Activated CD4-positive, alpha-beta T cell treated with anti-CD3 and anti-CD28 coated beads, Interleukin-2, amount 10 ng/mL, durations not matched to agents 24 days and 14 days (primary cell): ENCODE measurements at regions of chr2 and their contacts with region 1.

Region 1: DNA sequence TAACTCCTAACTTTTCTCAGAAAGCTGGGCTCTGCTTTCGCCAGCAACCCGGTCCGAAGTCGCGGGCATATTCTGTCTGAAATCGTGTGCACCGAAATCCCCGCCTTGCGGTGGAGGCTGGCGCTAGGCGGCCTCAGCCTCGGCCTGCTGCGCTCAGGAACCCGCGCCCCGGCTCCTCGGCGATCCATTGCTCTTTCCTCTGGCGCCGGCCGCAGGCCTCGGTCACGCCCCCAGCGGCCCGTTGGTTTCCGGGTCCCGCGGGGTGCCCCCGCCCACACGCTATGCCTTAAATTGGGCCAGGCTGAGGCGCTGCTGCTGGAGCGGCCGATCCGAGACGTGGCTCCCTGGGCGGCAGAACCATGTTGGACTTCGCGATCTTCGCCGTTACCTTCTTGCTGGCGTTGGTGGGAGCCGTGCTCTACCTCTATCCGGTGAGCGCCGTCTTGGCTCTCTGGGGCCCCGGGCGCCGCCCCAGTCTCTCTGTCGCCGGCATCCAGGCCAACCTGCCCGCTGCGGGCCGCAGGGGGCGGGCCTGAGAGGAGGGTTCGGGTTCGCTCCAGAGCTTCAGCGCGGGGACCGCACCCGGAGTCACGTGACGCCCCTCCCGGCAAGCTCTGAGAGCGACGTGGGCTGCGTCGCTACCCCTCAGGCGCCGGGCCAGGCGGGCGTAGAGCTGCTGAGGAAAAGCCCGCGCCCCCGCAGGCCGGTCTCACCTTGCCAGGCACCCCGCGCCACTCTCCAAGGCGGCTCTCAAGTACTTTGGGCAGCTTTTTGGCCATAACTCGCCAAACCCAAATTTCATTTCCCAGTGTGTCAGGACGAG is at the start of gene CYP20A1:
- DNase-seq: peak; percentile 99
- H3K4me3 Mint-ChIP-seq: peak within 1 kb of the TSS; percentile 95
- H3K27ac Mint-ChIP-seq: peak within 1 kb of the TSS; percentile 100
- H3K4me1 Mint-ChIP-seq: peaks cover 27% of the 10 kb centered on the region
- H3K27me3 Mint-ChIP-seq: no peaks in the 10 kb centered on the region
- total RNA-seq, gene CYP20A1: 21.6 and 23.2 TPM in 2 replicates

Region 2: DNA sequence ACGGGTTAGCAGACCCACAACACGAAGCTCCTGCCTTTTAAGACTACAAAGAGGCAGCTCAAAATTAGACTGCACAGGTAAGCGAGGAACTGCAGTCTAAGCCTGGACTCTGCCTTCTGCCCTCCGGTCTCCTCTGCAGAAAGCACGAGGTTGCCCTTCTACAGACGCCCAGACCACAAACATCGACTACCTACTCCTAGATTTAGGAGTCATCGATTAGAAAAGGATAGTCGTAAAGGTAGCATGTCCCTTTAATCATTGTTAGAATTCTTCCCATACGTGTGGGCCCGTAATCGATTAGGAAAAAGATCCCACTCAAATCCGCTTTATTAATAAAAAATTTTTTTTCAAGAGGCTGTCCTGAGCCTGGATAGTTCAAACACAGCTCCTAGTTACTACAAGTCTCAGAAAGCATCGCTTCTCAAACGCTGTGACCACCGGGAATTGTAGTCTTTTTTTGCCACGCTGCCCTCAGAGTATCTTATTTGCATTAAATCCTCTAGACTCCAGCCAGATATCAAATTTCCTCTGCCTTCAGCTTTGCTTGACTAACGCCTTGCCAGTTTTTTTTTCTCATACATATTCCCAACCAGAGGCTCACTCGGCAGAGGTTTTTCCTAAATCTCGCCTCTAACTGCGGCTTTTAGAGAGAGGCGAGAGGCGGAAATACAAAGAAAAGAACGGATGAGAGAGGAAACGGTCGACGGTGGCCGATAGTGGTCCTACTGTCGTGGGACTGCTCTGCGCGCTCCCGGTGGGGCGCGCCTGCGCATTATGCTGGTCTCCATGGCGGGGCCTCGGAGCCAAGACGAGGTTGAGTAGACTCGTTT is 327.2 kb before region 1 on chr2 and contains the starts of genes CARF and WDR12:
- intact Hi-C with region 1: loop called (anchors 1 kb)
- DNase-seq: peak; percentile 97
- H3K4me3 Mint-ChIP-seq: peak within 1 kb of the TSS; percentile 99
- H3K27ac Mint-ChIP-seq: peak within 1 kb of the TSS; percentile 95
- H3K4me1 Mint-ChIP-seq: peaks cover 24% of the 10 kb centered on the region
- H3K27me3 Mint-ChIP-seq: no peaks in the 10 kb centered on the region
- total RNA-seq, gene CARF: 3.9 and 4.3 TPM in 2 replicates
- total RNA-seq, gene WDR12: 161 and 167 TPM in 2 replicates

Region 3: GRCh38 chr2:203014456-203015199 is 224.3 kb before region 1 on chr2 and contains the start of gene NBEAL1:
- intact Hi-C with region 1: loop called (anchors 1 kb)
- DNase-seq: peak; percentile 99
- H3K4me3 Mint-ChIP-seq: peak within 1 kb of the TSS; percentile 98
- H3K27ac Mint-ChIP-seq: peak within 1 kb of the TSS; percentile 77
- H3K4me1 Mint-ChIP-seq: peaks cover 31% of the 10 kb centered on the region
- H3K27me3 Mint-ChIP-seq: peaks cover 15% of the 10 kb centered on the region
- total RNA-seq, gene NBEAL1: 7.2 and 9.5 TPM in 2 replicates

Region 4: GRCh38 chr2:203327901-203328759 is 89.2 kb after region 1 on chr2 and contains the start of gene ABI2:
- intact Hi-C with region 1: loop called (anchors 1 kb)
- DNase-seq: peak; percentile 91
- H3K4me3 Mint-ChIP-seq: peak within 1 kb of the TSS; percentile 91
- H3K27ac Mint-ChIP-seq: peak within 1 kb of the TSS; percentile 86
- H3K4me1 Mint-ChIP-seq: peaks cover 20% of the 10 kb centered on the region
- H3K27me3 Mint-ChIP-seq: no peaks in the 10 kb centered on the region
- total RNA-seq, gene ABI2: 27.5 and 32.7 TPM in 2 replicates